SK-N-SH (cell line): ENCODE measurements at regions of chr9 and their contacts with region 1.

Region 1: GRCh38 chr9:36995927-36996705 is 38.0 kb downstream of the PAX5 start:
- DNase-seq: peak; percentile 44
- H3K4me3 ChIP-seq: no peak overlapping the region
- H3K27ac ChIP-seq: no peak overlapping the region
- H3K4me1 ChIP-seq: peaks cover 0 to 24% of the 10 kb centered on the region in 2 experiments; a peak in 3 of 4 replicates
- H3K27me3 ChIP-seq: peaks cover 7% of the 10 kb centered on the region; the same call in 1 of the 2 replicates
- CTCF ChIP-seq: peak; percentile 52
- EP300 ChIP-seq: no peak
- RAD21 ChIP-seq: peak; percentile 44; the same call in 1 of the 2 replicates

Region 2: DNA sequence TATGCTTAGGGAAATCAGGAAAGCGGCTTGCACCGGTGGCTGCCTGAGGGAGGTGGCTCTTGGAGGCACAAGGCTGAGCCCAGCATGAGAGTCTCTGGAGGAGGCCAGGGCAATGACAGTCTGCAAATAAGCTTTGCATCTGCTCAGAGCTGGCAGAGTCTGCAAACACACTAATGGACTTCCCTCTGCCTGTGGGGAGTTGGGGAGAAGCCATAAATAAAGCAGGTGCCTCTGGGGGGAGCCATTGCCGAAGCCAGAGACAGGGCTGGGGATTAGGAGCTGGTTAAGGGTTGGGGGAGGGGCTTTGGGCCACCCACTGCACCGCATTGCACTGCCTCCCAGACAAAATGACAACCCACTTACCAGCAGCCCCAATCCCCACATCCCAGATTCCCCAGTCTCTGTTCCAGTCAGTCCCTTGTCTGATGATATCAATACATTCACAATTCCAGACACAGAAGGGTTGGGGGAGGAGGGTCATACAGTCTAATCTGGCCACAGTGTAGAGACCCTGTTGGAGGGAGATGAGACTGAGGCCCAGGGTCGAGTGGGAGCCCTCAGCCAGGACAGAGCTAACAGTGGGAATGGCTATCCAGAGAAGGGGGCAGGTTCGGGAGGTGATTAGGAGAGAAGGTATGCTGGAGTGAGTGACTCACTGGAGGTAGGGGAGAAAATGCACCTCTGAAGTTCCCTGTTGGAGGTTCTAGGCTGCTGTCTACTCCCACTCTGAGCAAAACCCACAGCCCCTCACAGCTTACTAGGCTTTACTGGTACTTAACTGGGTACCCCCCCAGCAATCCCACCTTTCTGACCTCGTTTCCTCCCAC is 15.8 kb before region 1 on chr9:
- CTCF ChIA-PET with region 1: interaction called, 19 read pairs
- POLR2A ChIA-PET with region 1: no interaction called
- DNase-seq: peak; percentile 72
- H3K4me3 ChIP-seq: no peak overlapping the region
- H3K27ac ChIP-seq: peak overlapping the region in 1 of 2 experiments; percentile 22; a peak in 1 of 4 replicates
- H3K4me1 ChIP-seq: peaks cover 0 to 13% of the 10 kb centered on the region in 2 experiments; a peak in 1 of 4 replicates
- H3K27me3 ChIP-seq: peaks cover 21% of the 10 kb centered on the region; the same call in 1 of the 2 replicates
- CTCF ChIP-seq: no peak; the same call in 1 of the 2 replicates
- EP300 ChIP-seq: no peak; a peak in 1 of 4 replicates
- RAD21 ChIP-seq: peak; percentile 68

Region 3: DNA sequence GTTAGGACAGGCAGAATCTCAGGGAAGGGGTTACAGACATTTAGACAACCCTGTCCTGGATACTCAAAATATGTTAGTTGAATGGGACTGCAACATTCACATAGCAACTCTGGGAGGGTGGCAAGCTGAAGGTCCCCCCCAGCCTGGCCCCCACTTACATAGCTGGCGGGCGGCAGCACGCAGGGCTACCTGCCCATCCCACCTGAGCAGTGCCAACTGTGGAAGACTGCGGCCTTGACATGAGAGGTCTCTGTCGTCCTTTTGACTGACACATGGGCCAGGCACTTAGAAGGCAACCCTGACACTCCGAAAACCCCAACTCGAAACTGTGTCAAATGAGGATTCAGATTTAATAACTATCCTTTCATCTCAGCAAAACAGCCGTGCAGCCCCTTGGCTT is 21.4 kb after region 1 on chr9:
- CTCF ChIA-PET with region 1: no interaction called
- POLR2A ChIA-PET with region 1: no interaction called
- DNase-seq: no peak
- H3K4me3 ChIP-seq: no peak overlapping the region
- H3K27ac ChIP-seq: no peak overlapping the region
- H3K4me1 ChIP-seq: no peaks in the 10 kb centered on the region
- H3K27me3 ChIP-seq: peaks cover 17% of the 10 kb centered on the region; the same call in 1 of the 2 replicates
- CTCF ChIP-seq: no peak
- EP300 ChIP-seq: no peak
- RAD21 ChIP-seq: no peak

Region 4: DNA sequence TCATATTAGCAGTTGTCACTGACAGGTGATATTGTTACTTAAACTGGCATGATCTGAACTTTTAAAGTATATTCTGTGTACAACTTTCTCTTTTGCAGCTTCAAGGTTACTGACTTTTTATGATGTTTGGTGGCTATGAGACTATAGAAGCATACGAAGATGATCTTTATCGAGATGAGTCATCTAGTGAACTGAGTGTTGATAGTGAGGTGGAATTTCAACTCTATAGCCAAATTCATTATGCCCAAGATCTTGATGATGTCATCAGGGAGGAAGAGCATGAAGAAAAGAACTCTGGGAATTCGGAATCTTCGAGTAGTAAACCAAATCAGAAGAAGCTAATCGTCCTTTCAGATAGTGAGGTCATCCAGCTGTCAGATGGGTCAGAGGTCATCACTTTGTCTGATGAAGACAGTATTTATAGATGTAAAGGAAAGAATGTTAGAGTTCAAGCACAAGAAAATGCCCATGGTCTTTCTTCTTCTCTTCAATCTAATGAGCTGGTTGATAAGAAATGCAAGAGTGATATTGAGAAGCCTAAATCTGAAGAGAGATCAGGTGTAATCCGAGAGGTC is 130.2 kb after region 1 on chr9:
- CTCF ChIA-PET with region 1: no interaction called
- POLR2A ChIA-PET with region 1: no interaction called
- DNase-seq: no peak
- H3K4me3 ChIP-seq: no peak overlapping the region
- H3K27ac ChIP-seq: no peak overlapping the region
- H3K4me1 ChIP-seq: peaks cover 3 to 10% of the 10 kb centered on the region in 2 experiments; a peak in 2 of 4 replicates
- H3K27me3 ChIP-seq: no peaks in the 10 kb centered on the region
- CTCF ChIP-seq: no peak
- EP300 ChIP-seq: no peak
- RAD21 ChIP-seq: no peak